Prostate gland (tissue), 2 donors: ENCODE measurements at regions of chr14 and their contacts with region 1.

Region 1: DNA sequence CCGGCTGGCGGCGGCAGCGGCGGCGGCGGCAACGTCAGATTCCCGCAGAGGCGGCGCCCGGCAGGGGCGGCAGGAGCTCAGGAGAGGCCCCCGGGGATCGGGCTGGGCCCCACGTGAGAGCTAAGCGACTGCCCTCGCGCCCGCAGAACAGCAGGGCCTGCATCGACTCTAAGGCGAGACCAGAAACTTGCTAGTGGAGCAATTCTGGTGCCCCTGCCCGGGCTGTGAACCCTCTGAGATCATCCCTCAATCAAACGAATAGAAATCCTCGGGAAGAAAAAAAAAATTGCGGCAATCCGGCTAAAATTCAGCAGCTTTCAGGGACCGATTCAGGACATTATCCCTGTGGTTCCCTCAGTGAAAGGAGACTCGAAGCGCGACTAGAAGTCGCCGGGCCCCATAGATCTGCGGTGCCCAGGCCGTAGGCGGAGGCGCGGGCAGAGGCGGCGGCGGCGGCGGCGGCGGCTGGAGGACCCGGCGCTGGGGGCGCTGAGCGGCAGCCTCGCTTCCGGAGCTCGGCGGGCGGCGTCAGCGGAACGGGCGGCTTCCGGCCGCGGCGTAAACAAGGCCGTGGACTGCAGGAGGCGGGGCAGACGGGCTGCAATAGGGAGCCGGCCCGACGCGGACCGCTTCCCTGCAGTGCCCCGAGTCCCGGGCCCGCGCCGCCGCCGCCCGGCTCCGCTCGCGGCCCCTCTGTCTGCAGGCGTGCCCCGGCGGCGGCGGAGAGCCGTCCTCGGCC is at the start of gene KLHDC2:
- DNase-seq: peak; percentile 87
- H3K4me3 ChIP-seq: peak within 1 kb of the TSS; percentile 96 to 98
- H3K27ac ChIP-seq: peak within 1 kb of the TSS; percentile 91 to 97
- H3K4me1 ChIP-seq: no peaks in the 10 kb centered on the region
- H3K27me3 ChIP-seq: no peaks in the 10 kb centered on the region
- CTCF ChIP-seq: peak; percentile 24 to 60 (median 57)
- POLR2A ChIP-seq: peak; percentile 98
- total RNA-seq, gene KLHDC2: 78.4 to 83.2 TPM

Region 2: GRCh38 chr14:49692811-49693734 is 74.7 kb before region 1 on chr14 and contains the start of gene KLHDC1:
- intact Hi-C with region 1: loop called (anchors 5 kb)
- DNase-seq: peak; percentile 72
- H3K4me3 ChIP-seq: peak within 1 kb of the TSS; percentile 70 to 76
- H3K27ac ChIP-seq: peak within 1 kb of the TSS; percentile 93 to 96
- H3K4me1 ChIP-seq: no peaks in the 10 kb centered on the region
- H3K27me3 ChIP-seq: no peaks in the 10 kb centered on the region
- CTCF ChIP-seq: no peak
- POLR2A ChIP-seq: peak; percentile 74
- total RNA-seq, gene KLHDC1: 4.6 to 7.7 TPM